ENCODE measurements at regions of chrX and their contacts with region 1.

Region 1: GRCh38 chrX:14476205-14476604 is 53.1 kb upstream of the GLRA2 start:
- DNase-seq: no peak
- H3K4me3 ChIP-seq: no peak overlapping the region
- H3K27ac ChIP-seq: no peak overlapping the region
- H3K4me1 ChIP-seq: peaks cover 5% of the 10 kb centered on the region
- H3K27me3 ChIP-seq: no peaks in the 10 kb centered on the region
- CTCF ChIP-seq: no peak
- POLR2A ChIP-seq: no peak

Region 2: DNA sequence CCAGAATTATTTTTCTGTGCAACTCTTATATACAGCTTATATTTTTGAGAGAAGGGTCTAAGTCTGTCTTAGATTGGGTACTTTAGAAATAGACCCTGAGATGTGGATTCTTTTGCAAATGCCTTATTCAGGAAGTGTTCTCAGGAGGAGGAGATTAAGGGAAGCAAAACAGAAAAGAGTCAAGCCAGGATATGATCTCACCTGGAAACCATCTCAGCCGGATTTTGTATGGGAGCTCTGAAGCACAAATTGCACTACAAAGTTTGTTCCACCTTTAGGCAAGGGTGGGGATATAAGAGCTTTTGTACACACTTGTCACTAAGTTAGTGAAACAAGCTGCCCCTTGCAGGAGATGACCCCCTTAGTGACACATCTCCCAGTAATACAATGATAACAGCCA is 1526.0 kb after region 1 on chrX:
- intact Hi-C with region 1: loop called (anchors 10 kb)
- DNase-seq: no peak
- H3K4me3 ChIP-seq: no peak overlapping the region
- H3K27ac ChIP-seq: no peak overlapping the region
- H3K4me1 ChIP-seq: no peaks in the 10 kb centered on the region
- H3K27me3 ChIP-seq: no peaks in the 10 kb centered on the region
- CTCF ChIP-seq: no peak
- POLR2A ChIP-seq: no peak

Measured in vagina (tissue), 2 donors.